Aorta (tissue), 5 donors: ENCODE measurements at regions of chr11 and their contacts with region 1.

Region 1: GRCh38 chr11:35082321-35083182 is 56.4 kb upstream of the CD44 start:
- DNase-seq: peak; percentile 83 to 87
- ATAC-seq: peak; percentile 63
- H3K4me3 ChIP-seq: no peak overlapping the region
- H3K27ac ChIP-seq: peak overlapping the region; percentile 68 to 70
- H3K4me1 ChIP-seq: peaks cover 5 to 7% of the 10 kb centered on the region in 2 donors
- H3K27me3 ChIP-seq: no peaks in the 10 kb centered on the region

Region 2: DNA sequence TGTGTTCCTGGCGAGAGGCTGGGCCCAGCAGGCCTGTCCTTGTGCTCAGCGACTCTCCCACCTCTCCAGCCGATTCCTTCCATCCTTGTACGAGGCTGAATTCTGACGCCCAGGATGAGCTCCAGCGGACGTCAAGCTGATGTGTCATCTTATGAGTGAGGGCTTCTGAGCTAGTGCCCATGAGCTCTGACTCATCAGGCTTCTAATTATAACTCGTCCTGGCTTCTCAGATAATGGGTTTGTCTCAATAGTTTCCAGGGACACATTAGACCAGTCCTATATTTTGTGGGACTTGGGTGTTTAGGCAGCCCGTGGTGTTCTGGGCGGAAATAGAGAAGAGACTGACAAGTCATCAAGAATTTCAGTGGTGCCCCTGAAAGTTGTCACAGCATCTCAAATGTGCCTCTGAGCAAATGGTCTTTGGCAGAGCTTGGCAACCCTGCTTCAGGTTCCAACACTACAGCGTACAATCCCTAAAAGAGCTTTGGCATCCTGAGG is 51.8 kb before region 1 on chr11:
- intact Hi-C with region 1: loop called in 1 of 2 experiments (anchors 10 kb)
- DNase-seq: peak; percentile 75 to 80
- ATAC-seq: peak; percentile 48
- H3K4me3 ChIP-seq: no peak overlapping the region
- H3K27ac ChIP-seq: no peak overlapping the region
- H3K4me1 ChIP-seq: peaks cover 0 to 5% of the 10 kb centered on the region in 2 donors
- H3K27me3 ChIP-seq: no peaks in the 10 kb centered on the region

Region 3: GRCh38 chr11:35126000-35126878 is 43.7 kb after region 1 on chr11:
- intact Hi-C with region 1: no loop called
- DNase-seq: no peak
- ATAC-seq: no peak
- H3K4me3 ChIP-seq: no peak overlapping the region
- H3K27ac ChIP-seq: no peak overlapping the region
- H3K4me1 ChIP-seq: no peaks in the 10 kb centered on the region
- H3K27me3 ChIP-seq: no peaks in the 10 kb centered on the region

Region 4: GRCh38 chr11:35165423-35166368 is 83.1 kb after region 1 on chr11:
- intact Hi-C with region 1: loop called in 1 of 2 experiments (anchors 5 kb)
- DNase-seq: peak in 1 of 2 donors; percentile 71
- ATAC-seq: no peak
- H3K4me3 ChIP-seq: no peak overlapping the region
- H3K27ac ChIP-seq: peak overlapping the region; percentile 9 to 87
- H3K4me1 ChIP-seq: peaks cover 19 to 37% of the 10 kb centered on the region in 2 donors
- H3K27me3 ChIP-seq: no peaks in the 10 kb centered on the region